Heart right ventricle (tissue), 16 donors: ENCODE measurements at regions of chr13 and their contacts with region 1.

Region 1: GRCh38 chr13:99636728-99637353 is 135.6 kb downstream of the TM9SF2 start:
- DNase-seq: no peak
- ATAC-seq: no peak
- H3K4me3 ChIP-seq: no peak overlapping the region
- H3K27ac ChIP-seq: no peak overlapping the region
- H3K4me1 ChIP-seq: peaks cover 0 to 3% (median 0%) of the 10 kb centered on the region in 9 donors
- H3K27me3 ChIP-seq: no peaks in the 10 kb centered on the region
- CTCF ChIP-seq: no peak

Region 2: GRCh38 chr13:99577934-99578917 is 58.6 kb before region 1 on chr13:
- intact Hi-C with region 1: loop called in 1 of 10 experiments (anchors 2 kb)
- DNase-seq: no peak
- ATAC-seq: peak in 5 of 8 donors; percentile 18 to 79 (median 52)
- H3K4me3 ChIP-seq: no peak overlapping the region
- H3K27ac ChIP-seq: no peak overlapping the region
- H3K4me1 ChIP-seq: peaks cover 0 to 9% (median 0%) of the 10 kb centered on the region in 9 donors
- H3K27me3 ChIP-seq: peaks cover 0 to 13% (median 7%) of the 10 kb centered on the region in 7 donors
- CTCF ChIP-seq: peak in 8 of 9 donors; percentile 5 to 56 (median 36)